ENCODE measurements at regions of chr6 and their contacts with region 1.

Region 1: GRCh38 chr6:71028236-71028876 is 71.5 kb upstream of the B3GAT2 start:
- DNase-seq: no peak

Region 2: DNA sequence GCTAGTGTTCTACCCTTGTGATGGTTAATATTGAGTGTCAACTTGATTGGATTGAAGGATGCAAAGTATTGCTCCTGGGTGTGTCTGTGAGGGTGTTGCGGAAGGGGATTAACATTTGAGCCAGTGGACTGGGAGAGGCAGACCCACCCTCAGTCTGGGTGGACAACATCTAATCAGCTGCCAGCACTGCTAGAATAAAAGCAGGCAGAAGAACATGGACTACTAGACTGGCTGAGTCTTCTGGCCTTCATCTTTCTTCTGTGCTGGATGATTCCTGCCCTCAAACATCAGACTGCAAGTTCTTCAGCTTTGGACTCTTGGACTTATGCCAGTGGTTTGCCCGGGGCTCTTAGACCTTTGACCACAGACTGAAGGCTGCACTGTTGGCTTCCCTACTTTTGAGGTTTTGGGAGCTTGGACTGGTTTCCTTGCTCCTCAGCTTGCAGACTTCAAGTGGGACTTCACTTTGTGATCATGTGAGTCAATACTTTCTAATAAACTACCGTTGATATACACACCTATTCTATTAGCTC is 411.6 kb before region 1 on chr6:
- CTCF ChIA-PET with region 1: interaction called, 12 read pairs
- POLR2A ChIA-PET with region 1: no interaction called
- DNase-seq: no peak

Region 3: DNA sequence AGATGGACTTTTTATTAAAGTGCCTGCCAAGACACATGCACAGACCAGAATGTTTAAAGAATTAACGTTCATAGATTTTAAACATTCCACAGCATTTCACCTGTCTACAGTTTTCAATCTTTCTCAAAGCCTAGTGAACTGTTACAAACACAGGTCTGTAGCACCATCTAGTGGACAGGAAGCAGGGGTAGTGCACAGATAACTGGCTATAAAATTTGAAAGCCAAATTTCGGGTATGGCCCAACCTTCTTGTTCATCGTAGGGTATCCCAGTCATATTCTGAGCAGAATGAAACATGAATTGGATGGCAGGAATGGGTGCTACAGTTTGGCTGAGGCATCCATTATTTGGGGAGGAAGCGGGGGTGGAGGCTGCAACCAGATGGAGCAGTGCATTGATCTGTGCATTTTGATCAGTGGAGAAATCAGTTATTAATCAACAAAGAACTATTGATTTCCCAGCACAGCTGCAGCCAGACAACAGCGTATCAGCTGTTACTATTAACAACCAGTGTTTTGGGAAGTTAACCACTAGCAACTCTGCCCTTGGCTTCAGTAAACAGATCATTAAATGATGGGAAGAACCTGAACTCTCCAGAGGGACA is 15.4 kb before region 1 on chr6:
- CTCF ChIA-PET with region 1: no interaction called
- POLR2A ChIA-PET with region 1: no interaction called
- DNase-seq: peak; percentile 61

Measured in HEK293T (cell line).